ENCODE measurements at regions of chr17 and their contacts with region 1.

Region 1: DNA sequence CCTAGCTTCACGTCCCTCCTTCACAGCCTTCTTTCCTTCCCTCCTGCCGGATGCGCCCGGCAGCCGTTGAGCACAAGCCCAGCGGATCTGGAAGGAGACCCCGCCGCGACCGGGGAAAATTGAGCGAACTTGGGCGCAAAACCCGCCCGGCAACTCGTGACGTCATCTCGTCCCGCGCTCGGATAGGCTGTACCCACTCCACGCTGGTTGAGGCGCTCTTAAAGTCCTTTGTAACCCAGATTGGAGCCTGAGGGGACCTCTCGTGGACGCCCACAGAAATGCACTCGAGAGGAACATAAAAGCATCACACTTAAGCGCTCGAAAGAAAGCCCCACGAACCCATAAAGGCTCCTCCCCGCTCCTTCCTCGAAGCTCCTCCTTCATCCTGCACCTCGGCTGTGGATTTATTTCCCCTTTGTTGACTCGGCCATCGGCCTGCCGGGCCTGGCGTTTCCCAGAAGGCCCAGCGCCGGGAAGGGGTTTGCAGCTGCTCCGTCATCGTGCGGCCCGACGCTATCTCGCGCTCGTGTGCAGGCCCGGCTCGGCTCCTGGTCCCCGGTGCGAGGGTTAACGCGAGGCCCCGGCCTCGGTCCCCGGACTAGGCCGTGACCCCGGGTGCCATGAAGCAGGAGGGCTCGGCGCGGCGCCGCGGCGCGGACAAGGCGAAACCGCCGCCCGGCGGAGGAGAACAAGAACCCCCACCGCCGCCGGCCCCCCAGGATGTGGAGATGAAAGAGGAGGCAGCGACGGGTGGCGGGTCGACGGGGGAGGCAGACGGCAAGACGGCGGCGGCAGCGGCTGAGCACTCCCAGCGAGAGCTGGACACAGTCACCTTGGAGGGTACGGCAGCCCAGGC is at the start of gene PSMD3:
- DNase-seq: peak; percentile 99
- H3K4me3 ChIP-seq: peak within 1 kb of the TSS; percentile 79 to 99 (median 89)
- H3K27ac ChIP-seq: peak within 1 kb of the TSS; percentile 95 to 98 (median 97)
- H3K4me1 ChIP-seq: peaks cover 0 to 40% (median 30%) of the 10 kb centered on the region in 4 donors
- H3K27me3 ChIP-seq: no peaks in the 10 kb centered on the region
- CTCF ChIP-seq: peak; percentile 64 to 96 (median 73)
- EP300 ChIP-seq: peak in 1 of 4 donors; percentile 77
- POLR2A ChIP-seq: peak; percentile 88 to 90
- total RNA-seq, gene PSMD3: 53.2 to 71.3 (median 64.2) TPM

Region 2: DNA sequence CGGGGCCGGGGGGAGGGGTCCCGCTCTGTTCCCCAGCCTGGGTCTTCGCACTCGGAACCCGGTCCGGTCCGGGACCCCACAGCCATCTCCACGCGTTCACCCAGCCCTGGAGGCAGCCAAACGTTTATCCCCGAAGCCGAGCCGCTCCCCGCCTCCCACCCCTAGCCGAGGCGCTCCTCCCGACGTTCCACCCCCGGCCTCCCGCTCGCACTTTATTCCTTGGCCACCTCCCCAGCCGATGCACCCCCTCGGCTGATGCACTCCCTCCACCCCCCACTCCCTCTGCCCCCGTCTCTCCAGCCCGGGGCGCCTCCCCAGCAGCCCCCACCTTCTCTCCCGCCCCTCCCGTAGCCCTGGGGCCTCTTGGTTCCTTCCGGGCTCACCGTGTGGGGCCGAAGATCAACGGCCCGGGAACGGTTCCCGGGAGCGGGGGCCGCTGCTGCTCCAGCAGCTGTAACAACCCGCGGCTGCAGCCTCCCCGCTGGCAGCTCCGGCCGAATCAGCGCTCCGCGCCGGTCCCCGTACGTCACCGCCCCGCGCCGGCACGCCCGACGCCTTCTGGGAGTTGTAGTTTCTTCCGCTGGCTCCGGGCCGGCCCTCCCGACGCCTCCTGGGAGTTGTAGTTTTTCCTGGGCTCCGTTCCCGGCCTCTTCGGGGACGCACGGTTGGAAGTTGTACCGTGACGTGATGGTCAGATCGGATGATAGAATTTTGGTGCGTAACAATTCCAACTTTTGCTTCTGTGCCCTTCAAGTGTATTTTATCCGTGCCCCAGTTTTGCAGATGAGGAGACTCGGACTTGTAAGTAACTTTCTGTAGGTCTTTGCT is 53.3 kb before region 1 on chr17 and contains the starts of genes LRRC3C and ORMDL3:
- intact Hi-C with region 1: loop called (anchors 2 kb)
- DNase-seq: peak; percentile 98
- H3K4me3 ChIP-seq: peak within 1 kb of the TSS; percentile 54 to 93 (median 91)
- H3K27ac ChIP-seq: peak within 1 kb of the TSS; percentile 89 to 92 (median 90)
- H3K4me1 ChIP-seq: peaks cover 0 to 46% (median 33%) of the 10 kb centered on the region in 4 donors
- H3K27me3 ChIP-seq: no peaks in the 10 kb centered on the region
- CTCF ChIP-seq: no peak
- EP300 ChIP-seq: peak in 1 of 4 donors; percentile 72
- POLR2A ChIP-seq: peak in 1 of 2 donors; percentile 64
- total RNA-seq, gene LRRC3C: not detected
- total RNA-seq, gene ORMDL3: 39.8 to 55.7 (median 51.8) TPM

Region 3: GRCh38 chr17:39963829-39964228 is 16.8 kb before region 1 on chr17:
- intact Hi-C with region 1: loop called (anchors 1 kb)
- DNase-seq: no peak
- H3K4me3 ChIP-seq: no peak overlapping the region
- H3K27ac ChIP-seq: no peak overlapping the region
- H3K4me1 ChIP-seq: peaks cover 0 to 4% (median 0%) of the 10 kb centered on the region in 4 donors
- H3K27me3 ChIP-seq: no peaks in the 10 kb centered on the region
- CTCF ChIP-seq: no peak
- EP300 ChIP-seq: no peak
- POLR2A ChIP-seq: no peak

Region 4: DNA sequence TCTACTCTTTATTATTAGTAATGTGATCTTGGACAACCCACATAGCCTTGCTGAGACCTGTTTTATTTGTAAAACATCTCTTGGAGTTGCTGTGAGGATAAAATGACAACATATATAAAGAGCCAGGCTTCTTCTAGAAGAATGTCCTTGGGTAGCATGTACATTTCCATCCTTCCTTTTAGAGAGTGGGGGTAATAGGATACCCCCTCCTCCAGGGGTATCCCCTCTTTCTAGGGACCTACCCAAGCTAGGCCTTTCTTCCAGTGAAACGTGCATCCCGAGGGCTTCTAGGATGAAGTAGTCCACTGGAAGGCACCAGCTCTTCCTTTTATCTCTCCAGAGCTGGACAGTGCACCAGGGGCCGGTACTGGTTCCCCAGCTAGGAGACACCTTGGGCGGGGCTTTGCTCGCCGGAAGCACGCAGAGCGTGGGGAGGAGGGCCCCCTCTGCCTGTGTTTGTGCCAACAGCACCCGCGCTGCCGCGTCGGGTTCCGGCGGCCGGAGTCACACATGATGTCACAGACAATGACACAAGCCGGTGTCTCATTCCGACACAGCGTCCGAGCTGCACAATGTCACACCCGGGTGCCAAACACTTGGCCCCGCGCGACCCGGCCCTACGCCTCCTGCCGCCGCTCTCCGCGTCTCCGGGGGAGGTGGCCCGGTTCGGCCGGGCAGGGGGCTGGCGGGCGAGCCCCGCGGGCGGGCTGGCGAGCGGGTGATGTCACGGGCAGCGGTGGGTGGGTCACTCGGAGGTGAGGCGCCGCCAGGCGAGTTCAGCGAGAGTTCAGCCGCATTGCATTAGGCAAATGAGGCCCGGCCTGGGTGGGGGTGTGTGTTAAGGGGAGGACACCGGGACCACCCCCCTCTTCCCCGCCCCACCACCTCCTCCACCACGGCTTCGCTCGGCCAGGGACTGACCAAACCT is 360.6 kb after region 1 on chr17:
- intact Hi-C with region 1: no loop called
- DNase-seq: peak; percentile 97
- H3K4me3 ChIP-seq: peak overlapping the region; percentile 61 to 83 (median 82)
- H3K27ac ChIP-seq: peak overlapping the region; percentile 94 to 99 (median 96)
- H3K4me1 ChIP-seq: peaks cover 0 to 79% (median 61%) of the 10 kb centered on the region in 4 donors
- H3K27me3 ChIP-seq: no peaks in the 10 kb centered on the region
- CTCF ChIP-seq: no peak
- EP300 ChIP-seq: peak in 2 of 4 donors; percentile 53 to 94
- POLR2A ChIP-seq: peak; percentile 49 to 55

Region 5: GRCh38 chr17:40536295-40537171 is 556.0 kb after region 1 on chr17:
- intact Hi-C with region 1: loop called (anchors 5 kb)
- DNase-seq: peak; percentile 81
- H3K4me3 ChIP-seq: no peak overlapping the region
- H3K27ac ChIP-seq: peak overlapping the region; percentile 45 to 89 (median 84)
- H3K4me1 ChIP-seq: peaks cover 0 to 77% (median 68%) of the 10 kb centered on the region in 4 donors
- H3K27me3 ChIP-seq: no peaks in the 10 kb centered on the region
- CTCF ChIP-seq: no peak
- EP300 ChIP-seq: peak in 2 of 4 donors; percentile 9 to 74
- POLR2A ChIP-seq: no peak